Panc1 (cell line): ENCODE measurements at regions of chr3 and their contacts with region 1.

Region 1: GRCh38 chr3:56664823-56665222 is 18.2 kb downstream of the TASOR start:
- DNase-seq: no peak
- ATAC-seq: no peak
- H3K4me3 ChIP-seq: no peak overlapping the region
- H3K27ac ChIP-seq: no peak overlapping the region
- H3K4me1 ChIP-seq: no peaks in the 10 kb centered on the region
- H3K27me3 ChIP-seq: no peaks in the 10 kb centered on the region
- CTCF ChIP-seq: no peak

Region 2: GRCh38 chr3:56610669-56611335 is 54.0 kb before region 1 on chr3:
- CTCF ChIA-PET with region 1: no interaction called
- POLR2A ChIA-PET with region 1: no interaction called
- in situ Hi-C with region 1: no loop called
- intact Hi-C with region 1: no loop called
- DNase-seq: no peak
- ATAC-seq: no peak
- H3K4me3 ChIP-seq: no peak overlapping the region
- H3K27ac ChIP-seq: no peak overlapping the region
- H3K4me1 ChIP-seq: no peaks in the 10 kb centered on the region
- H3K27me3 ChIP-seq: no peaks in the 10 kb centered on the region
- CTCF ChIP-seq: no peak

Region 3: GRCh38 chr3:56677286-56677685 is 12.5 kb after region 1 on chr3:
- CTCF ChIA-PET with region 1: no interaction called
- POLR2A ChIA-PET with region 1: interaction called, 10 read pairs
- in situ Hi-C with region 1: no loop called
- intact Hi-C with region 1: no loop called
- DNase-seq: no peak
- ATAC-seq: no peak
- H3K4me3 ChIP-seq: no peak overlapping the region
- H3K27ac ChIP-seq: no peak overlapping the region
- H3K4me1 ChIP-seq: no peaks in the 10 kb centered on the region; the same call in 1 of the 2 replicates
- H3K27me3 ChIP-seq: no peaks in the 10 kb centered on the region
- CTCF ChIP-seq: no peak

Region 4: GRCh38 chr3:56711344-56711743 is 46.5 kb after region 1 on chr3:
- CTCF ChIA-PET with region 1: no interaction called
- POLR2A ChIA-PET with region 1: no interaction called
- in situ Hi-C with region 1: no loop called
- intact Hi-C with region 1: no loop called
- DNase-seq: no peak
- ATAC-seq: no peak
- H3K4me3 ChIP-seq: no peak overlapping the region
- H3K27ac ChIP-seq: no peak overlapping the region
- H3K4me1 ChIP-seq: no peaks in the 10 kb centered on the region
- H3K27me3 ChIP-seq: no peaks in the 10 kb centered on the region
- CTCF ChIP-seq: no peak